HEK293T (cell line): ENCODE measurements at regions of chr3 and their contacts with region 1.

Region 1: GRCh38 chr3:58049143-58049785 is 41.0 kb downstream of the FLNB start:
- DNase-seq: peak; percentile 68

Region 2: DNA sequence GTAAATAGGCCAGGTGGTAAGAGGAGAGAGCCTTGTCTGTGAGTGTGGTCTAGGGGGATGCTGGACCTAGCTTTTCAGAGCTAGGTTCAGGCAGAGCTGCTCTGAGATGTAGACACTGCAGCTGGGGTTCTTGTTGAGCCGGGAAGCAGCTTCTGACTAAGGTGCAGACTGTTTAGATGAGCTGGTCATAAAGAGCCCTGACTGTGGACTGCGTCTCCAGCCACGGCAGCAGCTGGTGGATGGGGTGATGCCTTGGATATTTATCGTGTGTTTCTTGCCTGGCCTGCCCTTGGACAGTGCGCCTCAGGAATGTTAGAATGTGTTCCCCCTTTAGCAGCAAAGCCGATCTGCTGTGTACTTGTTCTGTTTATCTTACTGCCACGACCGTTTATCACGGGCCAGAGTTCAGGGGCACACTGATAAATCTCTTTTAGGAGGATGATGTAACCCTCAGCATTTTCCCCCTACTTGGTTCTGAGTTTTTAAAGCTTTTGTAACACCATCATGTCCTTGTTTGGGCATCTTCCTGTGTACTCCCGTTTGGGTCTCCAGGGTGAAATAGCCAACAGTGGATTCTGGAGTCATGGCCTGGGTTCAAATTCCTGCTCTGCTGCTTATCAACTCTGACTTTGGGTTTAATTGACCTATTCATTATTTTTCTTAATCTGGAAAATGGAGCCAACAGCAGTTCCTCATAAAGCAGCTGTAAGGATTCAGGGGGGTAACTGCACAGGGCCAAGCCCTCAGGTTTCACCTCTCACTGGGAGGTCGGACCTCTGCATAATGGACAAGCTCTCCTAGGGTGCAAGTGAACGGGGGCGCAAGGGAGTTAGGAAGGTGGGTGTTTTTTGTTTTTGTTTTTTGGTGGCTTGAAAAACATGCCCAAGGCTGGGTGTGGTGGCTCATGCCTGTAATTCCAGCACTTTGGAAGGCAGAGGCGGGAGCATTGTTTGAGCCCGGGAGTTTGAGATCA is 10.4 kb after region 1 on chr3:
- CTCF ChIA-PET with region 1: interaction called, 3 read pairs
- POLR2A ChIA-PET with region 1: interaction called, 18 read pairs
- DNase-seq: no peak